GM12878 (cell line): ENCODE measurements at regions of chr11 and their contacts with region 1.

Region 1: DNA sequence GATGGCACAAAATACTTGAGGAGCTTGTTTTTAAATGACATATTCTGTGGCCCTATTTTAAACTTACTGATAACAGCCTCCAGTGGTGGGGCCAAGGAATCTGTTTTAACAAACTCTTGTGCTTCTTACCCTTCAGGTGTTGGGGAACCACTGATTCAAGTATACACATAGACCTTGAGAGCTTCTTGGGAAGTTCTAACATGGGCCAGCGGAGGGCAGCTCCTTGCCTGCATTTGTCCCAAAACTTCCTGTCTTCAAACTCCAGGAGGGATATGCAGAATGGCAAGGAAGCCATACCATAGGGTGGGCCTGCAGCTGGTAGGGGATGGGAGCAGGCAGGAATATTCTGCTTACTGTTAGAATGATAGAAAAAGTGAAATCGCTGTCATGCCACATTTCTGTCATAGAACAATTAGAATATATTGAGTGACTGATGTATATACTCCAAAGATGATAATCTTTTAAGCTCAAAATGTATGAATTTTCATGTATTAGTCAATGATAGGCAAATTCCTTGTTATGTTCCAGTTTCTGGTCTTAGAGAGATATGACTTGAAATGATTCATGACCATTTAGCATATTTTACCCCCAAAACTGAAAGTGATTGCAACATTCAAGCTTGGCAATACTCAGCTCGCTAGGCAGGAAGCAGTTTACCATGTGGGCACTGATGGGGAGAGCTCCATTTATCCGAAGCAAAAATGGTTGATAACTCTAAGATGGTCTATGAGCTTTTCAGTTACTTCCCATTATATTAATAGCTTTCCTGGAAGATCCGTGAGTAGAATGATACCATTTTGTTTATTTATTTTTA is 9.2 kb downstream of the EXT2 start:
- DNase-seq: no peak
- ATAC-seq: peak; percentile 29; the same call in 1 of the 3 replicates
- H3K4me3 ChIP-seq: no peak overlapping the region
- H3K27ac ChIP-seq: no peak overlapping the region
- H3K4me1 ChIP-seq: no peaks in the 10 kb centered on the region
- H3K27me3 ChIP-seq: no peaks in the 10 kb centered on the region
- CTCF ChIP-seq: no peak
- EP300 ChIP-seq: no peak
- POLR2A ChIP-seq: no peak
- RAD21 ChIP-seq: no peak

Region 2: GRCh38 chr11:44047931-44048431 is 56.7 kb before region 1 on chr11 and contains the start of gene ACCSL:
- CTCF ChIA-PET with region 1: no interaction called
- POLR2A ChIA-PET with region 1: no interaction called
- RAD21 ChIA-PET with region 1: no interaction called
- SMC1A ChIA-PET with region 1: no interaction called
- in situ Hi-C with region 1: no loop called
- intact Hi-C with region 1: loop called (anchors 10 kb)
- DNase-seq: no peak
- ATAC-seq: no peak
- H3K4me3 ChIP-seq: no peak within 1 kb of the TSS
- H3K27ac ChIP-seq: no peak within 1 kb of the TSS
- H3K4me1 ChIP-seq: no peaks in the 10 kb centered on the region
- H3K27me3 ChIP-seq: no peaks in the 10 kb centered on the region; a peak in 1 of 4 replicates
- CTCF ChIP-seq: no peak
- EP300 ChIP-seq: no peak
- POLR2A ChIP-seq: no peak
- RAD21 ChIP-seq: no peak
- polyA plus RNA-seq, gene ACCSL: not detected

Region 3: DNA sequence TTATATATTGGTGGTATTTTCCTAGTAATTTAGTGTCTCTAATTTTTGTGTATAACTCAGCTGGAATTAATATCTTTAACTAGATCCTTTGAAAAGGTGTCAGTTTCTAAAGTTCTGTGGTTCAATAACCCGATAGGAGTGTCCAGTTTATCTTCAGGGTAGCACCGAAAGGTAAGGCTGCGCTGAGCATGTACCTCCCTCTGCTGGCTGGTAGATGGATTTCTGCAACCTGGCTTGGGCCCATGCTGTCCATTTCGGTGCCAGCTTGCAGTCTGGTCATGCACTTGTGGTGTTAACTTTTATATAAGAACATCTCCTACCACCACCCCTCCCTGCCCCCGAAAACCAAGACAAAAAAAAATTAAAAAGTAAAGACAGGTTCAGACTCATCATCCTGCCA is 15.5 kb after region 1 on chr11:
- CTCF ChIA-PET with region 1: interaction called, 25 read pairs
- POLR2A ChIA-PET with region 1: interaction called, 3 read pairs
- RAD21 ChIA-PET with region 1: no interaction called
- SMC1A ChIA-PET with region 1: interaction called, 4 read pairs
- in situ Hi-C with region 1: no loop called
- intact Hi-C with region 1: no loop called
- DNase-seq: no peak
- ATAC-seq: peak; percentile 59; the same call in 2 of the 3 replicates
- H3K4me3 ChIP-seq: no peak overlapping the region
- H3K27ac ChIP-seq: no peak overlapping the region
- H3K4me1 ChIP-seq: no peaks in the 10 kb centered on the region
- H3K27me3 ChIP-seq: no peaks in the 10 kb centered on the region
- CTCF ChIP-seq: peak in 1 of 3 experiments; percentile 20; a peak in 1 of 6 replicates
- EP300 ChIP-seq: no peak
- POLR2A ChIP-seq: no peak
- RAD21 ChIP-seq: no peak